ENCODE measurements at regions of chr2 and their contacts with region 1.

Region 1: GRCh38 chr2:152047819-152048471 is 50.9 kb downstream of the CACNB4 start:
- DNase-seq: no peak
- ATAC-seq: no peak
- H3K4me3 ChIP-seq: no peak overlapping the region
- H3K27ac ChIP-seq: no peak overlapping the region
- H3K4me1 ChIP-seq: no peaks in the 10 kb centered on the region
- H3K27me3 ChIP-seq: no peaks in the 10 kb centered on the region
- CTCF ChIP-seq: peak; percentile 71

Region 2: DNA sequence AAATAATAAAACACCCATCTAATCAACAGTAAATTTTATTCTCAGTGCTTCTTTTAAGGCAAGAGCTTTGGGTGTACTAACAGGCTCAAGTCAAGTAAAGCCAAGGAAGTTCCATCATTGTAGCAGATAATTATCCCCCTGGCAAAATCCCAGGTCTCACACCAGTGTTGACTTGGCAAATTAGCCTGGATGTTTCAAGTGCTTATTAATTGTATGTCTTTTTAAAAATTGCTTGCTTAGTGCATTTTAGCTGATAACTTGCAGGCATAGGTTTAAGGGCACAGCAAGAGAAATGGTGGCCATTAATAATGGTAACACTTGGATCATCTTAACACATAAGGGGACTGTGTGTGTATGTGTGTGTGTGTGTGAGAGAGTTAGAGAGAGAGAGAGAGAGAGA is 245.0 kb after region 1 on chr2:
- CTCF ChIA-PET with region 1: no interaction called
- POLR2A ChIA-PET with region 1: no interaction called
- in situ Hi-C with region 1: no loop called
- intact Hi-C with region 1: no loop called
- DNase-seq: no peak
- ATAC-seq: no peak
- H3K4me3 ChIP-seq: no peak overlapping the region
- H3K27ac ChIP-seq: no peak overlapping the region
- H3K4me1 ChIP-seq: no peaks in the 10 kb centered on the region
- H3K27me3 ChIP-seq: no peaks in the 10 kb centered on the region
- CTCF ChIP-seq: no peak

Region 3: GRCh38 chr2:152319831-152320570 is 272.1 kb after region 1 on chr2:
- CTCF ChIA-PET with region 1: no interaction called
- POLR2A ChIA-PET with region 1: no interaction called
- in situ Hi-C with region 1: no loop called
- intact Hi-C with region 1: loop called (anchors 10 kb)
- DNase-seq: no peak
- ATAC-seq: no peak
- H3K4me3 ChIP-seq: no peak overlapping the region
- H3K27ac ChIP-seq: no peak overlapping the region
- H3K4me1 ChIP-seq: no peaks in the 10 kb centered on the region
- H3K27me3 ChIP-seq: no peaks in the 10 kb centered on the region
- CTCF ChIP-seq: no peak